ENCODE measurements at regions of chr7 and their contacts with region 1.

Region 1: DNA sequence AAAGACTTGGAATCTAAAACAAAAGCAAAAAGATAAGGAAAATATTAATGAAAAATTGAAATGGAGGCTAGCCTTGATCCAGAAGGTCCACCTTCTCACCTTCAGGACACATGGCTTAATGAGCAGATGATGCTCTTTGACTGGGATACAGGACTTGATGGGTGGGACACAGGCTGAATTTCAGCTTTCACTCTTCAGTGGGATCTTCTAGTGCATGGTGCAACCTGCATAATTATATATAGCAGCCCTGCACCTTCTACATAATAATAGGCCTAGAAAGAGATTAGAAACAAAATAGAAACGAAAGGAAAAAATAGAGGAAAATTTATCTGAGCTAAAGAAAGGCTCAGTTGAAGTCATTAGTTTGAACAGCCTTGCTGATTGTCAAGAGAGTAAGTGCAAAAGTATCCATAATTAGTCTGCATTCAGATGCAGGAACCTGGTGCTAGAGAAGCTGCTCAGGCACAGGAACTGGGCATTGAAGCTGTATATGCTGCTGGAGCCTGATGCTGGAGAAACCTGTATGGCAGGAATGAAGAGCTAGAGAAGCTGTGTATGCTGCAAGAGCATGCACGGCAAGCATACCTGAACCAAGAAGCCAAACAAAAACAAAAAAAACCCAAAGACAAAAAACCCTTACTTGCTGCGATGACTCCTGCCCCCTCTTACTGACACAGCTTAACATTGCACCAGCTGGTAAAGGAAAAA is 19.4 kb downstream of the MKLN1 start:
- DNase-seq: no peak
- ATAC-seq: peak; percentile 26
- H3K4me3 ChIP-seq: no peak overlapping the region
- H3K4me3 Mint-ChIP-seq: peak overlapping the region in 5 of 10 donors; percentile 7 to 44 (median 26)
- H3K27ac ChIP-seq: no peak overlapping the region
- H3K27ac Mint-ChIP-seq: peak overlapping the region in 6 of 9 donors; percentile 2 to 50 (median 24)
- H3K4me1 ChIP-seq: peaks cover 3 to 12% of the 10 kb centered on the region in 2 donors
- H3K4me1 Mint-ChIP-seq: peaks cover 17 to 80% (median 62%) of the 10 kb centered on the region in 7 donors
- H3K27me3 ChIP-seq: no peaks in the 10 kb centered on the region
- H3K27me3 Mint-ChIP-seq: no peaks in the 10 kb centered on the region

Region 2: GRCh38 chr7:131305152-131305551 is 41.9 kb before region 1 on chr7:
- CTCF ChIA-PET with region 1: no interaction called
- POLR2A ChIA-PET with region 1: no interaction called
- intact Hi-C with region 1: no loop called
- DNase-seq: no peak
- ATAC-seq: no peak
- H3K4me3 ChIP-seq: no peak overlapping the region
- H3K4me3 Mint-ChIP-seq: no peak overlapping the region
- H3K27ac ChIP-seq: no peak overlapping the region
- H3K27ac Mint-ChIP-seq: no peak overlapping the region
- H3K4me1 ChIP-seq: no peaks in the 10 kb centered on the region
- H3K4me1 Mint-ChIP-seq: no peaks in the 10 kb centered on the region
- H3K27me3 ChIP-seq: no peaks in the 10 kb centered on the region
- H3K27me3 Mint-ChIP-seq: peaks cover 0 to under 1% (median 0%) of the 10 kb centered on the region in 5 donors

Region 3: GRCh38 chr7:131336956-131337355 is 10.1 kb before region 1 on chr7:
- CTCF ChIA-PET with region 1: interaction called, 3 read pairs
- POLR2A ChIA-PET with region 1: no interaction called
- intact Hi-C with region 1: loop called in 1 of 2 experiments (anchors 1 kb)
- DNase-seq: no peak
- ATAC-seq: no peak
- H3K4me3 ChIP-seq: no peak overlapping the region
- H3K4me3 Mint-ChIP-seq: peak overlapping the region in 2 of 10 donors; percentile 5 to 44
- H3K27ac ChIP-seq: no peak overlapping the region
- H3K27ac Mint-ChIP-seq: no peak overlapping the region
- H3K4me1 ChIP-seq: peaks cover 4 to 6% of the 10 kb centered on the region in 2 donors
- H3K4me1 Mint-ChIP-seq: peaks cover 10 to 82% (median 63%) of the 10 kb centered on the region in 7 donors
- H3K27me3 ChIP-seq: no peaks in the 10 kb centered on the region
- H3K27me3 Mint-ChIP-seq: no peaks in the 10 kb centered on the region